Heart left ventricle (tissue), 16 donors: ENCODE measurements at regions of chr4 and their contacts with region 1.

Region 1: GRCh38 chr4:39697740-39698423 is at the start of gene UBE2K:
- DNase-seq: peak; percentile 90 to 96 (median 93)
- ATAC-seq: peak; percentile 91 to 99 (median 98)
- H3K4me3 ChIP-seq: peak within 1 kb of the TSS; percentile 63 to 98 (median 85)
- H3K27ac ChIP-seq: peak within 1 kb of the TSS; percentile 83 to 98 (median 92)
- H3K4me1 ChIP-seq: peaks cover 0 to 39% (median 30%) of the 10 kb centered on the region in 12 donors
- H3K27me3 ChIP-seq: no peaks in the 10 kb centered on the region
- CTCF ChIP-seq: peak in 1 of 12 donors; percentile 25
- POLR2A ChIP-seq: peak in 1 of 2 donors; percentile 75
- total RNA-seq, gene UBE2K: 17.9 to 66.9 (median 53.2) TPM

Region 2: GRCh38 chr4:39469429-39470077 is 228.3 kb before region 1 on chr4:
- intact Hi-C with region 1: loop called in 1 of 10 experiments (anchors 5 kb)
- DNase-seq: no peak
- ATAC-seq: peak; percentile 47 to 84 (median 76)
- H3K4me3 ChIP-seq: peak overlapping the region in 1 of 12 donors; percentile 28
- H3K27ac ChIP-seq: peak overlapping the region in 6 of 12 donors; percentile 11 to 82 (median 22)
- H3K4me1 ChIP-seq: peaks cover 0 to 10% (median 0%) of the 10 kb centered on the region in 12 donors
- H3K27me3 ChIP-seq: no peaks in the 10 kb centered on the region
- CTCF ChIP-seq: peak; percentile 63 to 89 (median 80)
- POLR2A ChIP-seq: no peak

Region 3: DNA sequence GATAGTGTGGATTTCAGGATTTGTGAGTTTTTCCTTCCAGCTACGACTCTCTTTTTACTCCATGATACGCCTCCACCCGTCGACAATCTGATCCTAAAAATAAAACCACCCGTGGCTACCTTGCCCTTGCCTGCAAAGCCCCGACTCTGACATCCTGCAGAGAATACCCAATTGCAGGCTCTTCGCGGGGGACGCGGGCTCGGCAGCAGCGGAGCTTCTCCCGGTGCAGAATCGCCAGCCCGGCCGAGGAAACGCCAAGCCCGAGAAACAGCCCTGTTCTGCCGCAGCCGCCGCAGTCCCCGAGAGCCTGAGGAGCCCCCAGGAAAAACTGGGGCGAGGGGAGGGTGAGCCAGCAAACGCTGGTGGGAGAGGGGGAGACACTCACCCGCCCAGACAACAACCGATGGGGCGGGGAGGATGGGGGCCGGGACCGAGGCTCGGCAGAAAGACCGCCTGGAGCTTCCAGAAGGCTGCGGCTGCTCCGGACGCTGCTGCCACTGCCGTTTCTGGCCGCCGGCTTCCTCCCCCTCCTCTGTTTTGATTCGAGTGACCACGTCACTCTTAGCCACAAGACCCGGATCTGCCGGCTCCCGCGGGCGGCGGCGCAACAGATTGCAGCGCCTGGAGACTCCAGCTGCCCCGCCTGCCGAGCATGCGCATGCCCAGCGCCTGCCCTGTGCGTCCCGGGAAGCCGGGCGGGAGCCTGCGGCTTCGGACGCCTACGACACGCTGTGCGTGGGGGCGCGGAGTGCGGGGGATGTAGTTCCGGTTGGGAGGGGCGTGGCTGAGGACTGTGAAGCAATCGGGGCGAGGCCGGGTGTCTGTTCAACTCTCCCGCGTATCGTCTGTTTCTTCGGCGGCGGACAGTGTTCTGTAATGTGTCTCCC is 59.3 kb before region 1 on chr4 and contains the start of gene SMIM14:
- intact Hi-C with region 1: loop called in 5 of 10 experiments (anchors 2 to 5 kb)
- DNase-seq: peak; percentile 98 to 99 (median 99)
- ATAC-seq: peak; percentile 97 to 99 (median 98)
- H3K4me3 ChIP-seq: peak within 1 kb of the TSS; percentile 70 to 97 (median 78)
- H3K27ac ChIP-seq: peak within 1 kb of the TSS; percentile 87 to 99 (median 96)
- H3K4me1 ChIP-seq: peaks cover 0 to 43% (median 18%) of the 10 kb centered on the region in 12 donors
- H3K27me3 ChIP-seq: no peaks in the 10 kb centered on the region
- CTCF ChIP-seq: peak in 6 of 12 donors; percentile 14 to 33 (median 16)
- POLR2A ChIP-seq: peak; percentile 82 to 98
- total RNA-seq, gene SMIM14: 7.1 to 24.8 (median 11.9) TPM

Region 4: GRCh38 chr4:39823191-39823590 is 125.3 kb after region 1 on chr4:
- intact Hi-C with region 1: loop called in 1 of 10 experiments (anchors 10 kb)
- DNase-seq: no peak
- ATAC-seq: peak in 2 of 4 donors; percentile 34 to 39
- H3K4me3 ChIP-seq: no peak overlapping the region
- H3K27ac ChIP-seq: no peak overlapping the region
- H3K4me1 ChIP-seq: peaks cover 0 to 5% (median 0%) of the 10 kb centered on the region in 12 donors
- H3K27me3 ChIP-seq: no peaks in the 10 kb centered on the region
- CTCF ChIP-seq: no peak
- POLR2A ChIP-seq: no peak

Region 5: GRCh38 chr4:39864403-39864802 is 166.5 kb after region 1 on chr4:
- intact Hi-C with region 1: loop called in 1 of 10 experiments (anchors 10 kb)
- DNase-seq: no peak
- ATAC-seq: no peak
- H3K4me3 ChIP-seq: no peak overlapping the region
- H3K27ac ChIP-seq: no peak overlapping the region
- H3K4me1 ChIP-seq: no peaks in the 10 kb centered on the region
- H3K27me3 ChIP-seq: no peaks in the 10 kb centered on the region
- CTCF ChIP-seq: no peak
- POLR2A ChIP-seq: no peak

Region 6: GRCh38 chr4:40056716-40057585 is 359.1 kb after region 1 on chr4 and contains the start of gene N4BP2:
- intact Hi-C with region 1: loop called in 4 of 10 experiments (anchors 5 to 10 kb)
- DNase-seq: peak; percentile 86 to 93 (median 87)
- ATAC-seq: peak; percentile 60 to 86 (median 84)
- H3K4me3 ChIP-seq: peak within 1 kb of the TSS; percentile 73 to 100 (median 92)
- H3K27ac ChIP-seq: peak within 1 kb of the TSS; percentile 98 to 100 (median 100)
- H3K4me1 ChIP-seq: peaks cover 0 to 27% (median 12%) of the 10 kb centered on the region in 12 donors
- H3K27me3 ChIP-seq: no peaks in the 10 kb centered on the region
- CTCF ChIP-seq: peak; percentile 40 to 95 (median 76)
- POLR2A ChIP-seq: peak; percentile 56 to 91
- total RNA-seq, gene N4BP2: 3.5 to 6.8 (median 5.0) TPM